ENCODE measurements at regions of chr3 and their contacts with region 1.

Region 1: GRCh38 chr3:168952551-168952950 is 711.0 kb downstream of the MECOM start:
- DNase-seq: no peak
- H3K4me3 Mint-ChIP-seq: no peak overlapping the region
- H3K27ac Mint-ChIP-seq: peak overlapping the region; percentile 84
- H3K4me1 Mint-ChIP-seq: peaks cover 62% of the 10 kb centered on the region
- H3K27me3 Mint-ChIP-seq: no peaks in the 10 kb centered on the region
- CTCF ChIP-seq: no peak

Region 2: DNA sequence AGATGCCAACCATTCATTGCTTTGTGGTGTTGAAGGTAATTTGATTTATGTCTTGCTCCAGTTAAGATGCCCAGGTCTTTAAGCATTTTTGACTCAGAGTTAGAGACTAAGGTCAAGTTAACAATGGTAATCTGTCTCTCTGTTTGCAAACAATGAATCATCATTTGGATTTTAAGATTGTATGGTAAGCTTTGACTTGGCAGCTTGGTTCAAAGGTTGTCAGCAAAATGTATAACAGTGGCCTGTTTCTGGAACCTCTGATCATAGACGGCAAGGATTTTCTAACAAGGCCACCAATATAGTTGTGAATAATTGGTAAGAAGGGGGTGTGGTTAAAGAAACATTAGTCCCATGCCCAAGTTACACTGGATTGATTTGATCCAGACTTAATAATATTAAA is 81.7 kb before region 1 on chr3:
- CTCF ChIA-PET with region 1: interaction called, 28 read pairs
- intact Hi-C with region 1: loop called (anchors 2 kb)
- DNase-seq: peak; percentile 41
- H3K4me3 Mint-ChIP-seq: peak overlapping the region; percentile 20
- H3K27ac Mint-ChIP-seq: peak overlapping the region; percentile 78
- H3K4me1 Mint-ChIP-seq: peaks cover 86% of the 10 kb centered on the region
- H3K27me3 Mint-ChIP-seq: no peaks in the 10 kb centered on the region
- CTCF ChIP-seq: no peak

Region 3: DNA sequence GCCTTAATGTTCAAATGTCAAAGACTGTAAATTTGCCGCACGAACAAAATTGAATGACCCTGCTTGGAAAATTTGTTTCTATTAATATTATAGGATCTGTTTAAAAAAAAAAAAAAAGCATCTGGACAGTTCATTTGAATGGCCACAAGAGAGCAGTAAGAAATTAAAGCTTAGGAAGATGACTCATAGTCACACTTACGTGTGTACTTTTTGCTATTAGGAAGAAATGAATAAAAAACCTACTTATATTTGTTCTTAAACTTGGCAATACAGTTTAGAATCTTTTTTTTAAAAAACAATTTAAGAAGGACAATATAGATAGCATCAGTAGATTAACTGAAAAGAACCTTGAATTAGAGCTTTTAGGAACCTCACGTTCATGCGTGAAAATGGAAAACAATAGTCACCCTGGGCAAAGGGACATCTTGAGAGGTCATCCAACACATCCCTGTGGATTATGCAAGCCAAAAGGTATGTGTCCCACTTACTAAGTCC is 89.2 kb after region 1 on chr3:
- CTCF ChIA-PET with region 1: interaction called, 13 read pairs
- intact Hi-C with region 1: loop called (anchors 2 kb)
- DNase-seq: no peak
- H3K4me3 Mint-ChIP-seq: no peak overlapping the region
- H3K27ac Mint-ChIP-seq: peak overlapping the region; percentile 28
- H3K4me1 Mint-ChIP-seq: peaks cover 12% of the 10 kb centered on the region
- H3K27me3 Mint-ChIP-seq: no peaks in the 10 kb centered on the region
- CTCF ChIP-seq: peak; percentile 63

Region 4: GRCh38 chr3:169060042-169060441 is 107.5 kb after region 1 on chr3:
- CTCF ChIA-PET with region 1: no interaction called
- intact Hi-C with region 1: no loop called
- DNase-seq: no peak
- H3K4me3 Mint-ChIP-seq: no peak overlapping the region
- H3K27ac Mint-ChIP-seq: no peak overlapping the region
- H3K4me1 Mint-ChIP-seq: no peaks in the 10 kb centered on the region
- H3K27me3 Mint-ChIP-seq: no peaks in the 10 kb centered on the region
- CTCF ChIP-seq: peak; percentile 25

Region 5: DNA sequence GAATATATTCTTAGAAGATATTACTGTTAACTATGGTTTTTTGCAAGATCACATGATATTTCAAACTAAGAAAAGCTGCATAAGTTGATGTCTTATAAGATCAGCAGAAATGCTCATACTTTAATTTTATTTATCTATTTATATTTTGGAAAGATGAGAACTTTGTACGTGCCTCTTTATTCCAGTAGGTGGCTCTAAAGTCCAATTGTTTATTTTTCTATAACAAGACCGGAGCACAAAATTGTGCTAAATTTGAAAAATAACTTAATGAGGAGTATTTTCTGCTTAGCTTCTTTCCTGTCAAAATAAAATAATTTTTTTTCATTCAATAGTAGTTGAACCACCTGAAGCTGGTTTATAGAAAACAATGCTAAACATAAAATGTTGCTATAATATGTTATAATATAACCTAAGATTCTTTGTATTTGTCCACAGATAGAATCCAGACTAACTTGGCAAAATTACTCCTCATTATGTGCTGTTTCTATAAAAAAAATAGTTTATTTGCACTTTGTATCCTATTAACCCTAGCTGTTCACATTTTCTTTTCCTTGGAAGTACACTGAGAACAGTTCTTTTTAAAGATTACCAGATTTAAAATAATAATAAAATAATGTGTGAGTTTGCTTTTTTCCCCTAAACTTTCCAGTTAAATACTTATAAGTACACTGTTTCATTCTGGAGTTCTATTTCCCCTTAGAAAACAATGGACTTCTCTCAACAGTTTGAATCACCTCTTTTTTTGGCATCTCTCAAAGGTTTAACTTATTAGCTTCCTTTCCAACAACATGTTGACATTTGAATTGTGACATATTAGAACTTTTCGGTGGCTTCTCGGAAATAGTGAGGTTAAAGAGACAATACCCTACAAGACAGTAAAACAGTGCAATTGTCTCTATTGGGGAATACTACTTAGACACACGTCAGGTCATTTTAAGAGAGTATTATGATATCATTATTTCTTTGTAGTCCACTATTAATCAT is 180.9 kb after region 1 on chr3:
- CTCF ChIA-PET with region 1: interaction called, 8 read pairs
- intact Hi-C with region 1: loop called (anchors 2 kb)
- DNase-seq: no peak
- H3K4me3 Mint-ChIP-seq: peak overlapping the region; percentile 33
- H3K27ac Mint-ChIP-seq: peak overlapping the region; percentile 75
- H3K4me1 Mint-ChIP-seq: peaks cover 75% of the 10 kb centered on the region
- H3K27me3 Mint-ChIP-seq: no peaks in the 10 kb centered on the region
- CTCF ChIP-seq: peak; percentile 63

Region 6: DNA sequence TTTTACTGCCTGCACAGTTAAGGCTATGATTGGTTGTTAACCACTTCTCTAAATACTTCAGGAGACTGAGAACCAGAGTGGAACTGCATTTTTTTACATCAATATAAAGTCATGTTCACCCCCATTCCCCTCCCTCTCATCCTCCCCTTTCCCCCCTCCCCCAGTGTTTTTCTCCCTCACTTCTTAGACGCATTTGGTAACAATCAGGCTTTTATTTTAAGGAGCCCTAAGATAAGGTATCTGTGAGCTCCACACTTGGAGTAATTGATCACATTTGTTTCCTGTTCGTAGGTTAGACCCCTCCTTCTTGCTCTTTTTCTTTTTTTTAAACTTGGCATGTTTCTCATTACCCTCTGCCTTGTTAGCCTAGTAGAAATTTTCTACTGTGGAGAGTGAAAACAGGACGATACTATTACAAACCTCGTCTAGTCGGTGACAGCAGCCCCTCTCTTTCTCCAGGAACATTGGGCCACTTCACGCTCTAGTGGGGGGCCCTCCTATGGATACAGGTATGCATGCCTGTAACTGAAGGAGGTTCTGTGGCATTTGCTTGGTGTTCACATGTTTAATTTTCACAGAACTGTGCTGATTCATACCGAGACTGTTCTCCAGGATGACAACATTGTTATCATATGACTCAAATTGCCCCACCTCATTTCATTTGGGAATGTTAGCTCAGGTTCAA is 396.5 kb after region 1 on chr3:
- CTCF ChIA-PET with region 1: interaction called, 5 read pairs
- intact Hi-C with region 1: loop called (anchors 5 kb)
- DNase-seq: peak; percentile 60
- H3K4me3 Mint-ChIP-seq: peak overlapping the region; percentile 65
- H3K27ac Mint-ChIP-seq: peak overlapping the region; percentile 96
- H3K4me1 Mint-ChIP-seq: peaks cover 74% of the 10 kb centered on the region
- H3K27me3 Mint-ChIP-seq: no peaks in the 10 kb centered on the region
- CTCF ChIP-seq: no peak

Region 7: GRCh38 chr3:169744366-169745054 is 792.0 kb after region 1 on chr3:
- CTCF ChIA-PET with region 1: interaction called, 3 read pairs
- intact Hi-C with region 1: loop called (anchors 5 kb)
- DNase-seq: no peak
- H3K4me3 Mint-ChIP-seq: no peak overlapping the region
- H3K27ac Mint-ChIP-seq: no peak overlapping the region
- H3K4me1 Mint-ChIP-seq: peaks cover 12% of the 10 kb centered on the region
- H3K27me3 Mint-ChIP-seq: peaks cover 14% of the 10 kb centered on the region
- CTCF ChIP-seq: peak; percentile 42